B cell (primary cell): ENCODE measurements at regions of chr1 and their contacts with region 1.

Region 1: GRCh38 chr1:247172996-247173395 is 1.2 kb upstream of the ZNF124 start:
- DNase-seq: no peak
- ATAC-seq: no peak
- H3K4me3 ChIP-seq: no peak overlapping the region
- H3K4me3 Mint-ChIP-seq: no peak overlapping the region
- H3K27ac ChIP-seq: no peak overlapping the region
- H3K27ac Mint-ChIP-seq: no peak overlapping the region
- H3K4me1 ChIP-seq: peaks cover 0 to 6% of the 10 kb centered on the region in 2 donors
- H3K4me1 Mint-ChIP-seq: peaks cover 19% of the 10 kb centered on the region
- H3K27me3 ChIP-seq: peaks cover 0 to 2% (median 0%) of the 10 kb centered on the region in 4 experiments
- H3K27me3 Mint-ChIP-seq: no peaks in the 10 kb centered on the region
- CTCF ChIP-seq: no peak

Region 2: GRCh38 chr1:247007511-247008405 is 165.2 kb before region 1 on chr1 and contains the start of gene ZNF695:
- CTCF ChIA-PET with region 1: no interaction called
- POLR2A ChIA-PET with region 1: no interaction called
- intact Hi-C with region 1: no loop called
- DNase-seq: peak; percentile 83
- ATAC-seq: peak; percentile 99
- H3K4me3 ChIP-seq: peak within 1 kb of the TSS; percentile 31 to 62 (median 47)
- H3K4me3 Mint-ChIP-seq: peak within 1 kb of the TSS; percentile 93
- H3K27ac ChIP-seq: no peak within 1 kb of the TSS
- H3K27ac Mint-ChIP-seq: peak within 1 kb of the TSS; percentile 61
- H3K4me1 ChIP-seq: peaks cover 2 to 10% of the 10 kb centered on the region in 2 donors
- H3K4me1 Mint-ChIP-seq: peaks cover 4% of the 10 kb centered on the region
- H3K27me3 ChIP-seq: peaks cover 0 to 20% (median 2%) of the 10 kb centered on the region in 4 experiments
- H3K27me3 Mint-ChIP-seq: peaks cover 10% of the 10 kb centered on the region
- CTCF ChIP-seq: no peak
- total RNA-seq, gene ZNF695: 0.44 and 0.51 TPM in 2 replicates

Region 3: GRCh38 chr1:247131236-247131635 is 41.8 kb before region 1 on chr1:
- CTCF ChIA-PET with region 1: no interaction called
- POLR2A ChIA-PET with region 1: interaction called, 3 read pairs
- intact Hi-C with region 1: loop called (anchors 2 kb)
- DNase-seq: no peak
- ATAC-seq: no peak
- H3K4me3 ChIP-seq: no peak overlapping the region
- H3K4me3 Mint-ChIP-seq: no peak overlapping the region
- H3K27ac ChIP-seq: no peak overlapping the region
- H3K27ac Mint-ChIP-seq: no peak overlapping the region
- H3K4me1 ChIP-seq: peaks cover 0 to 3% of the 10 kb centered on the region in 2 donors
- H3K4me1 Mint-ChIP-seq: peaks cover 7% of the 10 kb centered on the region
- H3K27me3 ChIP-seq: no peaks in the 10 kb centered on the region
- H3K27me3 Mint-ChIP-seq: no peaks in the 10 kb centered on the region
- CTCF ChIP-seq: no peak

Region 4: DNA sequence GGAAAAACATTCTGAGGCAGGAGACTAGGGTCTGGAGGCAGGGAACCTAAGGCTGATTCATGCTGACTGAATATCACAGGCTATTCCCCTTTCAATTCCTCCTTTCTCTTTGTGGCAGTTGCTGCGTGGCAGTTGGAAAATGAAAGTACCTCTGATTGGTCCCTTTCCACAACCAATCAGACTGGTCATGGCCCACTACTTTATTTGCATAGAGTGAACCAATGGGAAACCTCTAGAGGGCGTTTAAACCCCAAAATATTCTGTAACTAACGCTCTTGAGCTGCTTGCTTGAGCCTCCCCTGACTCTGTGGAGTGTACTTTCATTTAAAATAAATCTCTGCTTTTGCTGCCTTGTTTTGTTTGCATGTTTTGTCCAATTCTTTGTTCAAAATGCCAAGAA is 55.1 kb after region 1 on chr1:
- CTCF ChIA-PET with region 1: no interaction called
- POLR2A ChIA-PET with region 1: no interaction called
- intact Hi-C with region 1: no loop called
- DNase-seq: no peak
- ATAC-seq: no peak
- H3K4me3 ChIP-seq: no peak overlapping the region
- H3K4me3 Mint-ChIP-seq: no peak overlapping the region
- H3K27ac ChIP-seq: no peak overlapping the region
- H3K27ac Mint-ChIP-seq: no peak overlapping the region
- H3K4me1 ChIP-seq: no peaks in the 10 kb centered on the region
- H3K4me1 Mint-ChIP-seq: no peaks in the 10 kb centered on the region
- H3K27me3 ChIP-seq: peaks cover 0 to 4% (median 0%) of the 10 kb centered on the region in 4 experiments
- H3K27me3 Mint-ChIP-seq: peaks cover 35% of the 10 kb centered on the region
- CTCF ChIP-seq: no peak